ENCODE measurements at regions of chr17 and their contacts with region 1.

Region 1: DNA sequence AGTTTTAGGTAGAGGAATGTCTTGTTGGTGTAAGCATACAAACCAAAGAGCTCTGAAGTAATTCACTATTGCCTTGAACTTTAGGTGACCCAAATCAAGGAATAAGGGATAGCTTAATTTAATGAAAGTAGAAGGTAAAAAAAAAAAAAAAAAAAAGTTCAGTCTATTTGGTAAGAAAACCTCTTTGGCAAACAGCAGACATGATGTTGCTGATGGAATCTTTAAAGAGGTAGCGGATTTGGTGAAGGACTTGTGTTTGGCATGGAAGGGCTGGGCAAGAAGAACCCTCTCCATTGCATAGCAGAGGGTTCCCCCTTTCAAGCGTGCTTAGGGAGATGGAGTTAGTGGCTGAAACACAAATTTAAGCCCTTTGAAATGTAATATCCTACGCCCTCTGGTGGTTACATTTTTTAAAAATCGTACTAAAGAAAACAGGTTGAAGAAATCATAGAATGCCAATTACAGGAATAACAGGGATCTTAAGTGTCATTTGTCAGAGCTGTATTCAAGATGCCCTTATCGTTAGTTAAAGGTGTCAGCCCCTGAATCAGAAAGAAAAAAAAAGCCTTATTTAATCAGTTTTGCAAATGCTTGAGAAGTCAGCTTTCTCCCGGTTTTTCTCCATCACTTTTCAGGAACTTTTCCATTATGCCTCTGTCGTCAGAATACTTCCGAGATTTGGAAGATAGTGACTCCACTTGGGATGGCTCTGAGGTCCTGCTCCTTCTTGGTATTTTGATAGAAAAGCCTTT is 383.1 kb downstream of the KCNJ2 start:
- DNase-seq: peak; percentile 13
- ATAC-seq: peak; percentile 68
- H3K4me3 ChIP-seq: no peak overlapping the region
- H3K27ac ChIP-seq: no peak overlapping the region
- H3K4me1 ChIP-seq: no peaks in the 10 kb centered on the region
- H3K27me3 ChIP-seq: no peaks in the 10 kb centered on the region
- CTCF ChIP-seq: peak; percentile 24 to 54 (median 31); a peak in 4 of 6 replicates
- EP300 ChIP-seq: no peak
- POLR2A ChIP-seq: no peak
- RAD21 ChIP-seq: peak; percentile 64

Region 2: DNA sequence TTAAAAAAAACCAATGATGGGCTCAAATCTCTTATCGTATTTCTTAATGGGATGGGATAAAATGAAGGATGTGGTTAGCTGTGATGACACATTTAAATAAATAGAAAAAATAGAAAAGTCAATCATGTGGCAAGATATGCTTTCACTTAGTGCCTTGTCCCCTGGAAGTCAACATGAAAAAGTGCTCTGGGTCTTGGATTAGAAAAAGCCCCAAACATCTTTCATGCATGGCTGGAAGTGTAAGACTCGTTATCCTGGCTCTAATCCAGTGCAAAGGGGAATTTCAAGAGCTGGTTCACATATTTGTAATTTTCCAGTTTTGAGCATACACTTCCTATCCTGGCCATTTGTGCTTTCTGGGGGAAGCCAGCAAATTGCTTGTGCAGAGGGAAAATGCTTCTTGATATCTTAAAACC is 977.1 kb before region 1 on chr17:
- CTCF ChIA-PET with region 1: interaction called, 4 read pairs
- POLR2A ChIA-PET with region 1: no interaction called
- RAD21 ChIA-PET with region 1: interaction called, 24 read pairs
- SMC1A ChIA-PET with region 1: interaction called, 5 read pairs
- in situ Hi-C with region 1: no loop called
- intact Hi-C with region 1: no loop called
- DNase-seq: no peak
- ATAC-seq: no peak
- H3K4me3 ChIP-seq: no peak overlapping the region
- H3K27ac ChIP-seq: no peak overlapping the region
- H3K4me1 ChIP-seq: 0 out of 2 replicates have a peak, but pooled peaks cover 5% of the 10 kb centered on the region
- H3K27me3 ChIP-seq: peaks cover 0 to 6% of the 10 kb centered on the region in 2 experiments; a peak in 1 of 4 replicates
- CTCF ChIP-seq: no peak
- EP300 ChIP-seq: no peak
- POLR2A ChIP-seq: no peak
- RAD21 ChIP-seq: no peak

Region 3: DNA sequence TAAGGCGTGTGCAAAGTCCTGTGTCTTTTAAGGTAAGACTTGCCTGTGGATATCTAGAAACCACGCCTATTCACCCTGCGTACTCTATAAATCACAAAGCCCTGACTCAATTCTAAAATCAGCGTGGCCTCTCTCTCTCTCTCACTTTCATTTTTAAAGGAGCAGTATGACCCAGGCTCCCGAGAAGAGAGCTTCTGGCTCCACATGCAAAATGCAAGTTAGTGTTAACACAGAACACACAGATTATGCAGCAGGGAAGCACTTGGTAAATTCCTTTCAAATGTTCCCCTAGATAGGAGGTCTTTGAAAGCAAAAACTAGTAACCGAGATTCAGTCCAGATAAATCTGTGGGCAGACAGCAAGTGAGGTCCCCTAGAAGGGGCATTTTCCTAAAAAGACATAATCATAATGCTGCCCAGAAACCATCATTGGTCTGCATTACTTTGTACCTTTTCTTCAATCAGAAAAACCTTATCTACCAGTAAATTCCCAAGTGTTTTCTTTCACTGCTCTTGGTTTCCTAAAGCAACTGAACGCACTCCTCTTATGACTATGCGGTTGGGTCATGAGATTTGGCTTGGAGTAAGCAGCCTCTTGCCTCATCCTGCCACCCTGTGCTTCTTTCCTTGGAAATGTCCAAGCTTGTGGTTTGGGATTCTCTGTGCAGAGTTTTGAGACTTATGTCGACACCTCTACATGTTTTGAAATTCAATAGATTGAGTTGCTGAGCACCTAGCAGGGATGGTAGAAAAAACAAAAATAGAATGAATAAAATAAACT is 414.8 kb before region 1 on chr17:
- CTCF ChIA-PET with region 1: interaction called, 21 read pairs
- POLR2A ChIA-PET with region 1: no interaction called
- RAD21 ChIA-PET with region 1: no interaction called
- SMC1A ChIA-PET with region 1: interaction called, 9 read pairs
- in situ Hi-C with region 1: no loop called
- intact Hi-C with region 1: loop called (anchors 5 kb)
- DNase-seq: peak; percentile 70
- ATAC-seq: peak; percentile 99
- H3K4me3 ChIP-seq: peak overlapping the region; percentile 4; the same call in 1 of the 2 replicates
- H3K27ac ChIP-seq: peak overlapping the region; percentile 22; the same call in 1 of the 2 replicates
- H3K4me1 ChIP-seq: peaks cover 18% of the 10 kb centered on the region
- H3K27me3 ChIP-seq: no peaks in the 10 kb centered on the region
- CTCF ChIP-seq: no peak
- EP300 ChIP-seq: peak; percentile 67 to 89
- POLR2A ChIP-seq: no peak
- RAD21 ChIP-seq: no peak

Region 4: DNA sequence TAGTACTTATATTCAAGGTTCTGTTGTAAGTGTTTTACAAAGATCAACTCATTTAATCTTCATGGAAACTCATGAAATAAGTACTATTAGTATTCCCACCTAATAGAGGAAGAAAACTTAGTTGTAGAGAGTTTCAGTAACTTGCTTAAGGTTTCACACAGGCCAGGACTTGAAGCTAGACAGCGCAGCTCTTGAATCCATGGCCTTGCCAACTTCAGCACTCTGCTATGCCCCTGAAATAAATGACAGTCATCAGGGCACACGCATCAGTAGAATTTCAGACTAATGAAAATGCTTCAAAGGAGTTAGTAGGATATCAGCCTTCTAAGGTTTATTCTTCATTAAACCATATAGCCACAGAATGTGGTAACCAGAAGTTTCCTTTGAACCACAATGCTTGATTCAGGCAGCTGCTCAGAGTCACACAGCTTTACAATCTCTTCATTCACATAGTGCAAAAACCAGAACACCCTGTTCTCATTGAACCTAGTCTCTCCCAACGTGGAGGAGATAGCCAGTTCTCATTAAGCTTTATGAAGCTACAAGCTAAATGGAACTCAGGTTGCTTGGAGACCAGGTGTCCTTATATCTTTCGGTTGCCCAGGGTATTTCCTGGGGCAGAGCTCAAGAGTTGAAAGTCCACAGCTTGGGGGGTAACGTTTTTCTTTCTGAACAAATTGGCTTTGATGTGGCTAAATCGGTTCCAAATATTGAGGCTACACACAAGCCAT is 343.4 kb before region 1 on chr17:
- CTCF ChIA-PET with region 1: interaction called, 4 read pairs
- POLR2A ChIA-PET with region 1: no interaction called
- RAD21 ChIA-PET with region 1: interaction called, 13 read pairs
- SMC1A ChIA-PET with region 1: interaction called, 12 read pairs
- in situ Hi-C with region 1: no loop called
- intact Hi-C with region 1: no loop called
- DNase-seq: peak; percentile 28
- ATAC-seq: peak; percentile 86
- H3K4me3 ChIP-seq: no peak overlapping the region
- H3K27ac ChIP-seq: no peak overlapping the region
- H3K4me1 ChIP-seq: no peaks in the 10 kb centered on the region; the same call in 1 of the 2 replicates
- H3K27me3 ChIP-seq: no peaks in the 10 kb centered on the region
- CTCF ChIP-seq: no peak
- EP300 ChIP-seq: peak; percentile 68 to 72; a peak in 2 of 4 replicates
- POLR2A ChIP-seq: no peak
- RAD21 ChIP-seq: no peak

Region 5: GRCh38 chr17:70365091-70365583 is 187.3 kb before region 1 on chr17:
- CTCF ChIA-PET with region 1: no interaction called
- POLR2A ChIA-PET with region 1: no interaction called
- RAD21 ChIA-PET with region 1: interaction called, 5 read pairs
- SMC1A ChIA-PET with region 1: interaction called, 9 read pairs
- in situ Hi-C with region 1: no loop called
- intact Hi-C with region 1: loop called (anchors 5 kb)
- DNase-seq: peak; percentile 71
- ATAC-seq: peak; percentile 99
- H3K4me3 ChIP-seq: no peak overlapping the region
- H3K27ac ChIP-seq: no peak overlapping the region; the same call in 1 of the 2 replicates
- H3K4me1 ChIP-seq: no peaks in the 10 kb centered on the region
- H3K27me3 ChIP-seq: no peaks in the 10 kb centered on the region
- CTCF ChIP-seq: no peak
- EP300 ChIP-seq: peak in 1 of 2 experiments; percentile 95; a peak in 2 of 4 replicates
- POLR2A ChIP-seq: no peak
- RAD21 ChIP-seq: no peak; the same call in 1 of the 2 replicates

Region 6: DNA sequence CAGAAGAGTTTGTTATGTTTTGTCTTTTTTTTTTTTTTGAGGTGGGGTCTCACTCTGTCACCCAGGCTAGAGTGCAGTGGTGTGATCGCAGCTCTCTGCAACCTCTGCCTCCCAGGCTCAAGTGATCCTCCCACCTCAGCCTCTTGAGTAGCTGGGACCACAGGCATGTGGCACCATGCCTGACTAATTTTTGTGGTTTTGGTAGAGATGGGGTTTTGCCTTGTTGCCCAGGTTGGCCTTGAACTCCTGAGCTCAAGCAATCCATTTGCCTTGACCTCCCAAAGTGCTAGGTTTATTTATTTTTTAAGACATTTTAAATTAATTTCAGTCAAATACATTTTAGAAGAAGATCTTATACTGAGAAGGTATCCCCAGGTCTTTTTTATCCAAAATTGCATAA is 16.4 kb before region 1 on chr17:
- CTCF ChIA-PET with region 1: interaction called, 10 read pairs
- POLR2A ChIA-PET with region 1: no interaction called
- RAD21 ChIA-PET with region 1: interaction called, 5 read pairs
- SMC1A ChIA-PET with region 1: interaction called, 5 read pairs
- in situ Hi-C with region 1: no loop called
- intact Hi-C with region 1: no loop called
- DNase-seq: no peak
- ATAC-seq: no peak
- H3K4me3 ChIP-seq: no peak overlapping the region
- H3K27ac ChIP-seq: no peak overlapping the region
- H3K4me1 ChIP-seq: no peaks in the 10 kb centered on the region
- H3K27me3 ChIP-seq: no peaks in the 10 kb centered on the region
- CTCF ChIP-seq: no peak
- EP300 ChIP-seq: no peak
- POLR2A ChIP-seq: no peak
- RAD21 ChIP-seq: no peak

Region 7: DNA sequence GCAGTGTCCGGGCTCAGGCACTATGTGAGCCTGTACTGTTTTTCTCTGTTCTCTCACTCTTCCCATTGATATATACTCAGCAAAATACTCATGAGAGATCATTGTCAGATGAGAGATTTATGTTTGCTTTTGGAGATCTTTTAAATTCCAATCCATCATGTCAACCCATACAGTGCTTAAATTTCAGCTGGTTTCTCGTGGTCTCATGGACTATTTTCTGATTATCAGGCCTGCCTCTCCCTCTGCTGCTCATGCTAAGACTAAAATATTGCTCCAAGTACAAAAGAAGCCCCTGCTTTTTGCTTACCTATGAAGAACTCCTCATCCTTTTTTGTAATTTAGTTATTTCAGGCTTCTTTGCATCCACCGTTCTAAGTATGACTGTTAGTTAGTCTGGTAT is 164.1 kb after region 1 on chr17:
- CTCF ChIA-PET with region 1: no interaction called
- POLR2A ChIA-PET with region 1: no interaction called
- RAD21 ChIA-PET with region 1: no interaction called
- SMC1A ChIA-PET with region 1: no interaction called
- in situ Hi-C with region 1: no loop called
- intact Hi-C with region 1: no loop called
- DNase-seq: no peak
- ATAC-seq: no peak
- H3K4me3 ChIP-seq: no peak overlapping the region
- H3K27ac ChIP-seq: no peak overlapping the region
- H3K4me1 ChIP-seq: no peaks in the 10 kb centered on the region
- H3K27me3 ChIP-seq: no peaks in the 10 kb centered on the region
- CTCF ChIP-seq: no peak
- EP300 ChIP-seq: no peak
- POLR2A ChIP-seq: no peak
- RAD21 ChIP-seq: no peak